ENCODE measurements at regions of chr10 and their contacts with region 1.

Region 1: DNA sequence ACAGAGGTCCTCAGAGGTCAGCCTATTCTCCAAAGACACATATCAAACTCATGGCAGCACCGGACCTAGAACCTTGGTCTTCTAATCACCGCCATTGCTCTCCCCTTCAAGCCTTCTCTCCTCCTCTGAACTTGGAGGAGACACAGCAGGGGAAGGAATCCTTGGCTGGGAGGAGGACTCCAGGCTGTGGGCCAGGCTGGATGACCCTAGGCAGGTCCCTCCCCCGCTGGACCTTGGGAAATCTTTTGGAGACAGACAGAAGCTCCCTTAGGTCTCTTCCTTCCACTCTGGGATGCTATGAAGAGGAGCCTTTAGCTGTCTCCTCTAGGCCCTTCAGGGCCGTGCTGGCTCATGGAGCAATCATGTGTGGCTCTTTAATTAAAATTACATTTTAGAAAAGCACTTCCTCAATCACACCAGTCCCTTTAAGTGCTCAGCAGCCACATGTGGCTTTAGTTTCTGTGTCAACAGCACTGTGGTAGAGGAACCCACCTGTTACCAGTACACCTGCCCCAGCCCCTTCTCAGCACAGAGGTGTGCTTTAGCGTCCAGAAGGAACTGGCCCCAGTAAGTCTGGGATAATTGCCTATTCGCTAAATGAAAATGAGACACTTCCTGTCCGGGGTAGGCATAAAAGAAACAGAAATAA is 238.2 kb downstream of the CELF2 start:
- DNase-seq: peak; percentile 36 to 39
- ATAC-seq: peak in 7 of 8 donors; percentile 24 to 69 (median 40)
- H3K4me3 ChIP-seq: no peak overlapping the region
- H3K27ac ChIP-seq: peak overlapping the region in 3 of 10 donors; percentile 6 to 57 (median 14)
- H3K4me1 ChIP-seq: peaks cover 0 to 65% (median 41%) of the 10 kb centered on the region in 9 donors
- H3K27me3 ChIP-seq: no peaks in the 10 kb centered on the region
- CTCF ChIP-seq: no peak

Region 2: DNA sequence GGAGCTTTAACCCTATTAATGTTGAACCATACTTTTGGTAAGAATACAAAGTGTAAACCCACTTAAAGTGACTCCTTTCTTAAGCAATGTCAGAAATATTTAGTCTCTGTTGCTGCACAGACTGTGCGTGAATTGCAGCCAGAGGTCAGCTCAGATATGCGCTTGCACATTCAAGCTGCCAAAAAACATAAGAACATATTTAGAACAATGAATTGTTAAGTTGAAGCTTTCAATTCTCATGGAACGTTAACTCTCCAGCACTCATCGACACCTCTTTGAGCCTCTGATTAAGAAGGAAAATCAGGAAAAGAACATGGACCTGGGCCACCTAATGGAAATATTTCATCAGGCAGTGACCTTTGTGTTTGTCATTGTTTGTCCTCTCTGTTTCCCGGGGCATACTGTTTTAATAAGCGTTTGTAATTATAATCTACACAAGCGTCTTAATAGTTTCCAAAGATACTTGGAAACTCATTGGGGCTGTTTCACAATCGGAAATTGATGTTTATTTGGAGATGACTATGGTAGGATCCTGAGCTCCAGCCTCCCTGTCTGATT is 431.2 kb before region 1 on chr10:
- intact Hi-C with region 1: loop called in 1 of 10 experiments (anchors 10 kb)
- DNase-seq: peak; percentile 26 to 45
- ATAC-seq: peak; percentile 68 to 93 (median 86)
- H3K4me3 ChIP-seq: peak overlapping the region in 2 of 10 donors; percentile 2 to 25
- H3K27ac ChIP-seq: peak overlapping the region; percentile 44 to 87 (median 78)
- H3K4me1 ChIP-seq: peaks cover 7 to 55% (median 32%) of the 10 kb centered on the region in 9 donors
- H3K27me3 ChIP-seq: no peaks in the 10 kb centered on the region
- CTCF ChIP-seq: peak in 3 of 9 donors; percentile 33 to 43 (median 39)

Region 3: GRCh38 chr10:11024596-11024995 is 231.3 kb before region 1 on chr10:
- intact Hi-C with region 1: loop called in 2 of 10 experiments (anchors 5 to 10 kb)
- DNase-seq: no peak
- ATAC-seq: peak in 6 of 8 donors; percentile 10 to 91 (median 52)
- H3K4me3 ChIP-seq: no peak overlapping the region
- H3K27ac ChIP-seq: peak overlapping the region in 2 of 10 donors; percentile 41 to 92
- H3K4me1 ChIP-seq: peaks cover 9 to 75% (median 54%) of the 10 kb centered on the region in 9 donors
- H3K27me3 ChIP-seq: peaks cover 0 to 26% (median 0%) of the 10 kb centered on the region in 7 donors
- CTCF ChIP-seq: no peak

Region 4: DNA sequence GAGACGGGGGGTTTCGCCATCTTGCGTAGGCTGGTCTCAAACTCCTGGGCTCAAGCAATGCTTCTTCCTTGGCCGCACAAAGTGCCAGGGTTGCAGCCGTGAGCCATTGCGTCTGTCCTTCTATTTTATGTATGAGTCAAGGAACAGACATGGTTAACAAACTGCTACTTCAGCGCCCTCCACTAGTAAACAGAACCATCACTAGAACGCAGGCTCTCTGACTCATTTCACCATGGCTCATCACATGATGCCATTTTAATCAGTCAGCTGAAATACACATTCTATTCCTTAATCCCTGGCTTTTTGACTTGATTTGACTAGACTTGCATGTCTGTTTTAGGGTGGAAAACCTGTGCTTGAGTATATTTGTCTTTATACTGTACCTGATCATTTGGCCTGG is 197.0 kb before region 1 on chr10:
- intact Hi-C with region 1: loop called in 1 of 10 experiments (anchors 10 kb)
- DNase-seq: no peak
- ATAC-seq: peak in 4 of 8 donors; percentile 15 to 40 (median 30)
- H3K4me3 ChIP-seq: no peak overlapping the region
- H3K27ac ChIP-seq: no peak overlapping the region
- H3K4me1 ChIP-seq: peaks cover 11 to 43% (median 38%) of the 10 kb centered on the region in 9 donors
- H3K27me3 ChIP-seq: no peaks in the 10 kb centered on the region
- CTCF ChIP-seq: no peak

Region 5: DNA sequence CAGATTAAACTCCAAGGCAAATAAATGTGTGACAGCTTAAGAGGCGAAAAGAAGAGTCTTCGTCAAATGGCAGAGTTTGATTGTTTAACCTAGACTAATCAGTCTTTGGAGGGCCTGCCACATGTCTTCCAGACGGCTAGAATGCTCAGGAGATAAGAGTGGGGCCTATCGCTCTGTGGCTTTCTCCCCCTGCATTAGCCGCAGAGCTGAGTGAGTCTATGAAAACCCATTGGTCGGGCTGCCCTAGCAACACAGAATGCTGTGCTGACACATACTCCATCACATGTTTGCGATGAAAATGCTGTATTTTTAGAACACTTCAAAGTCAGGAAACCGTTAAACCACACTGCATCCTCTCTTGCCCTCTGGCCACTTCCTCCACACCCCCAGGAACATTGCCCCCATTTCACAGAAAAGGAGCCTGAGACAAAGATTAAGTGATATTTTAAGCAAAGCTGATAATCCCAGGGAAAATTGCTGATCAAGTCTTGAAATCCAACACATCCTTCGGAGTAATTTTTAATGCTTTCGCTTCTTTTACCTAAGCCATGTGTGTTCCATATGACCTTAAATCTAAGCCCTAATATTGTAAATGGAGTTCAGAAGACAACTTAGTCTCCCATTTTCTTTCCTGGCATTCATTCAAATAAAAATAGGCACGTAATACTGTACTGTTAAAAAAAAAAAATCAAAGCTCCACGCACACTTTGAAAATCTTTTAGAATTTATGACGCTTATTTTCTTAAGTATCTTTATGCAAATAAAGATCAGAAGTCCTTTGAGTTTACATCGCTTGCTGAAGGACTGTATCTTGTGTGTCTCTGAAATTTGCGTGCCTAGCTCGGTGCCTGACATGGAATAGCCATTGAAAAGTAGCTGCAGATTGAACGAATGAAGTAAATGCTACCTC is 77.1 kb before region 1 on chr10:
- intact Hi-C with region 1: loop called in 4 of 10 experiments (anchors 5 to 10 kb)
- DNase-seq: peak; percentile 31 to 61
- ATAC-seq: peak; percentile 60 to 88 (median 76)
- H3K4me3 ChIP-seq: peak overlapping the region in 1 of 10 donors; percentile 26
- H3K27ac ChIP-seq: peak overlapping the region; percentile 6 to 81 (median 55)
- H3K4me1 ChIP-seq: peaks cover 2 to 100% (median 68%) of the 10 kb centered on the region in 9 donors
- H3K27me3 ChIP-seq: no peaks in the 10 kb centered on the region
- CTCF ChIP-seq: no peak

Measured in heart right ventricle (tissue), 16 donors.